ENCODE measurements at regions of chr18 and their contacts with region 1.

Region 1: DNA sequence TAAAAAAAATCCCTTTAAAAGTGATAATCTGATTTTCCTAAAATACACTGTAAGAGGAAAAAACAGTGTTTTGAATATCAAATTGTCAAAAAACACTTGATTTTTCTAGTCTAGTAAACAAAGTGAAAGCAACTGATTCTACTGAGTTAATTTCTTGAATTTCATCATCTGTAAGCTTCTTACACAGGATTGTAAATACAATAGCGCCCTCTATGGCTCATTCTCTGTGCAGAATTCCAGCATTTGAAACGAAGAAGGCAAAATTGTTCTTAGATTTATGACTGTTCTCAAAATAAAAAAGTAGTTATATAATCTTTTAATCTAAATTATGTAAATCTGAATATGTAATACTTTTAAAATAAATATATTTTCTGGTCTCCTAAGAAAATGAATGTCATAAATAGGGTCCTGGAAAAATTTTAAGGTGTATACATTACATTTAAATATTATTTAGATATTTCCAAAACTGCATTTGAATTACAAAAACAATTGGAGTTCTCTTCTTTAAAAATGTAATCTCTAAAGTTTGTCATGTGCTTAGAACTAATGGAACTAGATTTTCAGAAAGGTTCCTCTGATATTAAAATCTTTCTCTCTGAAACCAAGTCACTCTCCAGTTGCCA is 176.9 kb upstream of the MC4R start:
- DNase-seq: peak; percentile 1 to 58
- ATAC-seq: no peak
- H3K4me3 ChIP-seq: peak overlapping the region; percentile 26; the same call in 1 of the 3 replicates
- H3K27ac ChIP-seq: peak overlapping the region in 1 of 2 experiments; percentile 59; a peak in 2 of 6 replicates
- H3K4me1 ChIP-seq: no peaks in the 10 kb centered on the region
- CTCF ChIP-seq: peak; percentile 76
- EP300 ChIP-seq: no peak
- POLR2A ChIP-seq: no peak
- RAD21 ChIP-seq: peak; percentile 82

Region 2: GRCh38 chr18:59988098-59988706 is 561.2 kb before region 1 on chr18:
- CTCF ChIA-PET with region 1: interaction called, 20 read pairs
- POLR2A ChIA-PET with region 1: no interaction called
- DNase-seq: peak; percentile 7 to 53
- ATAC-seq: no peak
- H3K4me3 ChIP-seq: no peak overlapping the region
- H3K27ac ChIP-seq: no peak overlapping the region
- H3K4me1 ChIP-seq: no peaks in the 10 kb centered on the region
- CTCF ChIP-seq: peak; percentile 91
- EP300 ChIP-seq: no peak
- POLR2A ChIP-seq: no peak
- RAD21 ChIP-seq: peak; percentile 88 to 90

Region 3: DNA sequence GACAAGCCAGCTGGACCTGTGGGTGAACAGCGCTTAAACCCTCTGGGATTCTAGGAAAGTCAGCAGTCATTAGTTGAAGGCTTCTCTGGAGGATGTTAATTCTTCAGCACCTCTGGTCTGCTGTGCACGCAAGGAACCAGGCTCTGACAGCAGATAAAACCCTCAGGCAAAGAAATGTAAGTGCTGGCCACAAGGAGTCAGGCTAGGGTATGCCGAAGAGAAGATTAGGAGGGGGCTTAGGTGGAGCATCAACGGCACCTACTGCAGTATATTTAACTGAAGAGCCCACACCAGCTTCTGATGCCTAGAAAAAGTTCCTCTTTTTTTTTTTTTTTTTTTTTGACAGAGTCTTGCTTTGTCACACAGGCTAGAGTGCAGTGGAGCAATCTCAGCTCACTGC is 127.4 kb after region 1 on chr18:
- CTCF ChIA-PET with region 1: no interaction called
- POLR2A ChIA-PET with region 1: no interaction called
- DNase-seq: no peak
- ATAC-seq: no peak
- H3K4me3 ChIP-seq: no peak overlapping the region
- H3K27ac ChIP-seq: no peak overlapping the region
- H3K4me1 ChIP-seq: no peaks in the 10 kb centered on the region
- CTCF ChIP-seq: no peak
- EP300 ChIP-seq: no peak
- POLR2A ChIP-seq: no peak
- RAD21 ChIP-seq: no peak

Region 4: DNA sequence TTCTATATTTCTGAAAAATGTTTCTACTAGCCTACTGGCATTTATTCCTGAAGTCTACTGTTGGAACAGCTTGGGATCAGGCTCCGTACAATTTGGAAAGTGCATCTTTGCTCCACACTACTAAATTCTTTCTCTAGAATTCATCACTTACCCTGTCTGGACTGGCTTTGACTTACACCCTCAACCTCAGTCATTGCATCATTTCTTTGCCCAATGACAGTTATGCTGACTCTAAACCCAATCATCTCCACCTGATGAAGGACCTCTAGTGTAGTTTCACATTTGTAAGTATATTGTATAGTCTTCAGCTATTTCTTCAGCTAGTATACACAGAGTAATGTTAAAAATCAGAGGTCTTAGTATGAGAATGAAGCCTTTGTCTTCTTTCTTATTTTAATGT is 182.7 kb after region 1 on chr18:
- CTCF ChIA-PET with region 1: no interaction called
- POLR2A ChIA-PET with region 1: no interaction called
- DNase-seq: no peak
- ATAC-seq: no peak
- H3K4me3 ChIP-seq: no peak overlapping the region
- H3K27ac ChIP-seq: no peak overlapping the region
- H3K4me1 ChIP-seq: no peaks in the 10 kb centered on the region
- CTCF ChIP-seq: no peak
- EP300 ChIP-seq: no peak
- POLR2A ChIP-seq: no peak
- RAD21 ChIP-seq: no peak

Measured in A549 (cell line).